ENCODE measurements at regions of chr2 and their contacts with region 1.

Region 1: DNA sequence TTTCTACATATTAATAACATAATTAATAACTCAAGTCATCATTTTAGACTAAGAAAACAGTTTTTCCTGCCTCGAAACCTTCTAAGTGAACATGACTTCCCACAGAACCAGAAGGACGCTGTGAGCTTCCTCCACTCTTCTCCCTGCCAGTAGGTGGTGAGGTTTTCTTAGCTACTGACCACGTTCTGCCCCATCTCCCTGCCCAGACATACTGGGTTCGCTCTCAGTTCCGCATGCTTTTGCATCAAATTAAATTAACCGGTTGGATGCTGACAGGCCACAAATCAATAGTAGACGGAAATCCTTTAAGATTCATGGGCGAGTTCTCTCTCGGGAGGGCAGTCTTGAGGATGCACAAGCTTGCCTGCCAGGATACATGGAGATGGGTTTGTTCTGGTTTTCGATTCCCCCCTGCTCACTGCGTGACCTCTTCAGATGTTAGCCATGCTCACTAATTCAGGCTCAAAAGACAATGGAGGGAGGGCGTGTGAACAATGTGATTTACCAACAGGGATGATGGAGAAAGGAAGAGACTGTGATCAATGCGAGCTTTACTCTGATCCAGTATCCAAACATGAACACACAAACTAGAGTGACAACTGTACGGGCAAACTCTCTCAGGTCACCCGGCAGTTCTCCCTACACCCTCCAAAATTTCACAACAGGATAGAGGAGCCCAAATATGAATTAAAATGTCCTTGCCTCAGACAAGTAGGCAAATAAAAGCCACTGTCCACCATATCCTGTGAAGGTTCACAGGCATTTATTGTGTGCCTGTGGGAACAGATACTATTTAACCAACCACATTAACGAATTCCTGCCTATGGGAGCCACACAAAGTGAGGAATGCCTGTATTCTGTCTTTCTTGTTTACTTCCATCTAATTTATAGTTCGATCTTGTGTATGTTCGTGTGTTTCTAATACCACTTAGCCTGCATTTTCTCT is 375.7 kb downstream of the EIPR1 start:
- DNase-seq: no peak

Region 2: DNA sequence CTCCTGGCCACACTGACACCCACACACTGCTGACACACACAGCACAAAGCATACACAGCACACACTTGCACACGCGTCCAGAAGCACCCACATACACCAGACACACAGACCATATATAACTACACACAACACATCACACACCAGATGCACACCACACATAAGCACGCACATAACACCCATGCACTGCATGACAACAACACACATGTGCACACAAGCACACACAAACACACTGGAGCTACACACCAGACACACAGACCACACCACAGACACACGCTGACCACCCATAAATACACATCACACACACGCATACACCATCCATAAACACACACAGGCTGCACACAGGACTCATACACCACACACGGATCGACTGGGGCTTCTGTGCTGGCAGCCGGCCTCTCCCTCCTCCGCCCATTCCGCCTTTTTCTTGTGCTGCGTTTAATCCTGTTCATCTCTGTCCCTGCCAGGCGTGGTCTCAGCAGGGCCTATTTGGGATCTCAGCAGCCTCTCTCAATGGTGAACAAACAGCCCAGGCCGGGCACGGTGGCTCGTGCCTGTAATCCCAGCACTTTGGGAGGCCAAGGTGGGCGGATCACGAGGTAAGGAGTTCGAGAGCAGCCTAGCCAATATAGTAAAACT is 273.9 kb before region 1 on chr2:
- intact Hi-C with region 1: no loop called
- DNase-seq: no peak

Region 3: DNA sequence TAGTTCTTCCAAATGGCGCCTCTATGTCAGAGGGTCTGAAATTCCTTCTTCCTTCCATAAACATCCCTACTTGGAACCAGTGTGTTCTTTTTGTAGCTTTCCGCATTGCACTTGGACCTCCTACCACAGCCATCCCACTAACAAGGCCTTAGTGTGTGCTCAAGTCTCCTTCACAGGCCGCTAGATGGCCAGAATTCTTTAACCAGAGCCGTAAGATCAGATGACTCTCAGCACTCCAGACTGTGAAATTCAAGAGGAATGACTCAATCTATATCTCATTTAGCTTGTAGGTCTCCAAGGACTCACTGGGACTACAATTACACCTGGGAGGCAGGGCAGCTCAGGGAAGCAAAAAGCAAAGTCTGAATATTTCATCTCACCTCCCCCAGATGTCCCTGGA is 76.8 kb after region 1 on chr2:
- intact Hi-C with region 1: no loop called
- DNase-seq: no peak

Region 4: GRCh38 chr2:3303583-3304406 is 301.9 kb after region 1 on chr2:
- intact Hi-C with region 1: loop called (anchors 5 kb)
- DNase-seq: peak; percentile 94

Region 5: GRCh38 chr2:3644246-3644525 is 642.3 kb after region 1 on chr2:
- intact Hi-C with region 1: no loop called
- DNase-seq: no peak

Measured in cardiac septum (tissue), 1 donor.